CD8-positive, alpha-beta T cell (primary cell): ENCODE measurements at regions of chrX and their contacts with region 1.

Region 1: GRCh38 chrX:11137543-11138139 is 26.5 kb downstream of the HCCS start:
- DNase-seq: peak in 2 of 9 experiments; percentile 49 to 59
- ATAC-seq: no peak
- H3K4me3 ChIP-seq: no peak overlapping the region
- H3K4me3 Mint-ChIP-seq: no peak overlapping the region
- H3K27ac ChIP-seq: no peak overlapping the region
- H3K27ac Mint-ChIP-seq: no peak overlapping the region
- H3K4me1 ChIP-seq: no peaks in the 10 kb centered on the region
- H3K4me1 Mint-ChIP-seq: no peaks in the 10 kb centered on the region
- H3K27me3 ChIP-seq: peaks cover 0 to 2% of the 10 kb centered on the region in 2 experiments
- H3K27me3 Mint-ChIP-seq: peaks cover 5% of the 10 kb centered on the region
- CTCF ChIP-seq: peak; percentile 65

Region 2: DNA sequence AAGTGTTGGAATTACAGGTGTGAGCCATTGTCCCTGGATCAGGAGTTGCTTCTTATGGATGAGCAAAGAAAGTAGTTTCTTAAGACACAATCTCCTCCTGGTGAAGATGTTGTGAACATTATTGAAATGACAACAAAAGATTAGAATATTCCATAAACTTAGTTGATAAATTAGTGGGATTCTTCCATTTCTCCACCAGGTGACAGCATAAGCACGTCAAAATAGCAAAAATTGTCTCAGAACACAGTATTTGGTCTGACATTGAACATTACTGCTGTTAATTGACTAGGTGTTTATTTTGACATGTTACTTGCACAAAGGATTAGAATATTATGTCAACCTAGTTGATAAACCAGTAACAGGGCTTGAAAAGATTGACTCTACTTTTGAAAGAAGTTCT is 1148.9 kb before region 1 on chrX:
- CTCF ChIA-PET with region 1: no interaction called
- POLR2A ChIA-PET with region 1: no interaction called
- intact Hi-C with region 1: loop called in 1 of 2 experiments (anchors 10 kb)
- DNase-seq: peak in 2 of 9 experiments; percentile 23 to 37
- ATAC-seq: no peak
- H3K4me3 ChIP-seq: no peak overlapping the region
- H3K4me3 Mint-ChIP-seq: no peak overlapping the region
- H3K27ac ChIP-seq: no peak overlapping the region
- H3K27ac Mint-ChIP-seq: no peak overlapping the region
- H3K4me1 ChIP-seq: no peaks in the 10 kb centered on the region
- H3K4me1 Mint-ChIP-seq: no peaks in the 10 kb centered on the region
- H3K27me3 ChIP-seq: no peaks in the 10 kb centered on the region
- H3K27me3 Mint-ChIP-seq: no peaks in the 10 kb centered on the region
- CTCF ChIP-seq: no peak

Region 3: DNA sequence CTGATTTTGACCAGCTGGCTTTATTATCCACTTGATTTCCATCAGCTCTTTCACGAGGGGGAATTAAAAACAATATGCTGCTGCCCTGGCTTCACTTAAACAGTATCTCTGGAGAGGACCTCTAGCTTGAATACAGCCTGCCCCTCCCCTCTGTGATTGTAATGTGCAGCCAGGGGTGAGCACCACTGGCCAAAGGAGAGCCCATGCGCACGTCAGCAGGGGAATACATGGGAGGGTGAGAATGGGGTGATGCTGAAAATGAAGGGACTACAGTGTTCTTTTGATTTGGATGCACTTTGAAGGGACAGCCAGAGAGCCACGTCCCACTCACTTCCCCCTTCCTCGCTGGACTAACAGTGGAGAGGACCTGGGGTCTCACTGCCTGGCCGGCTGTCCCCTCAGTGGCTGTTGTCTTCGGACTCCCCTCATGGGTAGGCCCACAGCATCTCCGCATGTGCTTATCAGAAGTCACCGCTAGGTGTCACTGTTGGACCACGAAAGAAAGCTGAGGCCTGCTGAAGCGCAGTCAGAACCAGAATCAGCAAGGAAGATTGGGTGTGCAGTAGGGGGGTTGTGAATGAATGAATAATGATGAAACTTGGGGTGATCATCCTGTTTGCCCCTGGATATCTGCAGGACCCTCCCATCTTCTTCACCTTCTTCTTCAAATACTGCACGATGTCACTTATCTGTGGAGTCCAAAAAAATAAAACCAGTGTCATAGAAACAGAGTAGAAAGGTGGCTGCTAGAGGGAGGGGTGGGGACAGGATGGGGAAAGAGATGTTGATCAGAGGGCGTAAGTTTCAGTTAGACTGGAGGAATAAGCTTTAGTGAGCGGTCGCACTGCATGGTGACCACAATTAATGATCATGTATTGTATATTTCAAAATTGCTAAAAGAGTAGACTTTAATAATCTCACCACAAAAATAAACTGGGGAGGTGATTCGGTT is 948.0 kb before region 1 on chrX:
- CTCF ChIA-PET with region 1: interaction called, 31 read pairs
- POLR2A ChIA-PET with region 1: no interaction called
- intact Hi-C with region 1: loop called in 1 of 2 experiments (anchors 1 kb)
- DNase-seq: peak; percentile 34 to 87 (median 69)
- ATAC-seq: peak; percentile 46
- H3K4me3 ChIP-seq: no peak overlapping the region
- H3K4me3 Mint-ChIP-seq: no peak overlapping the region
- H3K27ac ChIP-seq: no peak overlapping the region
- H3K27ac Mint-ChIP-seq: no peak overlapping the region
- H3K4me1 ChIP-seq: no peaks in the 10 kb centered on the region
- H3K4me1 Mint-ChIP-seq: no peaks in the 10 kb centered on the region
- H3K27me3 ChIP-seq: no peaks in the 10 kb centered on the region
- H3K27me3 Mint-ChIP-seq: peaks cover 2% of the 10 kb centered on the region
- CTCF ChIP-seq: peak; percentile 65

Region 4: GRCh38 chrX:10794203-10794630 is 343.4 kb before region 1 on chrX:
- CTCF ChIA-PET with region 1: no interaction called
- POLR2A ChIA-PET with region 1: no interaction called
- intact Hi-C with region 1: no loop called
- DNase-seq: no peak
- ATAC-seq: no peak
- H3K4me3 ChIP-seq: no peak overlapping the region
- H3K4me3 Mint-ChIP-seq: no peak overlapping the region
- H3K27ac ChIP-seq: no peak overlapping the region
- H3K27ac Mint-ChIP-seq: no peak overlapping the region
- H3K4me1 ChIP-seq: no peaks in the 10 kb centered on the region
- H3K4me1 Mint-ChIP-seq: no peaks in the 10 kb centered on the region
- H3K27me3 ChIP-seq: no peaks in the 10 kb centered on the region
- H3K27me3 Mint-ChIP-seq: no peaks in the 10 kb centered on the region
- CTCF ChIP-seq: no peak

Region 5: GRCh38 chrX:11111038-11111851 is 26.4 kb before region 1 on chrX and contains the start of gene HCCS:
- CTCF ChIA-PET with region 1: no interaction called
- POLR2A ChIA-PET with region 1: no interaction called
- intact Hi-C with region 1: loop called in 1 of 2 experiments (anchors 1 kb)
- DNase-seq: peak; percentile 67 to 91 (median 84)
- ATAC-seq: peak; percentile 85
- H3K4me3 ChIP-seq: peak within 1 kb of the TSS; percentile 72 to 86
- H3K4me3 Mint-ChIP-seq: peak within 1 kb of the TSS; percentile 95
- H3K27ac ChIP-seq: peak within 1 kb of the TSS; percentile 82 to 95
- H3K27ac Mint-ChIP-seq: peak within 1 kb of the TSS; percentile 99
- H3K4me1 ChIP-seq: peaks cover 15% of the 10 kb centered on the region
- H3K4me1 Mint-ChIP-seq: peaks cover 30% of the 10 kb centered on the region
- H3K27me3 ChIP-seq: no peaks in the 10 kb centered on the region
- H3K27me3 Mint-ChIP-seq: no peaks in the 10 kb centered on the region
- CTCF ChIP-seq: no peak
- total RNA-seq, gene HCCS: 8.3 to 9.1 TPM

Region 6: DNA sequence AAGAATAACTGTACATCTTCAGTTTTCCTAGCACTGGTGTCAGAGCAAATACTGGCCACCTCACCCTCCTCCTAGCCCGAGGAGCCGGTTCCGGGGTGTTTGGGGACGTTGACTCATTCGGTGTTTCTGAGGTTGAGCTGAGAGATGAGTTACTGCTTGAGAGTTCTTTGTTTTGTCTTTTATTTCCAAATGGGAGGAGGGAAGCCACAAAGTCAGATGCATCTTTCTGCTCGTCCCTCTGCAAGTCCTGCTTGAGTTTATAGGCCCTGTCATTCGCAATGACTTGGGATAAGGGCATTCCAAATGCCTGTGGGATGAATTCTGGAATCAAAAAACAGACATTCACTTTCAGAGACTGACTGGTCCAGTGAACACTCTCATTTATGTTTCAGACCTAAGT is 51.0 kb after region 1 on chrX:
- CTCF ChIA-PET with region 1: no interaction called
- POLR2A ChIA-PET with region 1: no interaction called
- intact Hi-C with region 1: no loop called
- DNase-seq: no peak
- ATAC-seq: no peak
- H3K4me3 ChIP-seq: no peak overlapping the region
- H3K4me3 Mint-ChIP-seq: no peak overlapping the region
- H3K27ac ChIP-seq: no peak overlapping the region
- H3K27ac Mint-ChIP-seq: no peak overlapping the region
- H3K4me1 ChIP-seq: no peaks in the 10 kb centered on the region
- H3K4me1 Mint-ChIP-seq: no peaks in the 10 kb centered on the region
- H3K27me3 ChIP-seq: no peaks in the 10 kb centered on the region
- H3K27me3 Mint-ChIP-seq: no peaks in the 10 kb centered on the region
- CTCF ChIP-seq: no peak